ENCODE measurements at regions of chr11 and their contacts with region 1.

Region 1: GRCh38 chr11:62841361-62842184 is 2.2 kb upstream of the WDR74 start:
- H3K4me3 Mint-ChIP-seq: no peak overlapping the region
- H3K27ac Mint-ChIP-seq: no peak overlapping the region
- H3K4me1 Mint-ChIP-seq: peaks cover 25% of the 10 kb centered on the region
- H3K27me3 Mint-ChIP-seq: no peaks in the 10 kb centered on the region

Region 2: GRCh38 chr11:62295504-62295903 is 546.1 kb before region 1 on chr11:
- intact Hi-C with region 1: no loop called
- H3K4me3 Mint-ChIP-seq: no peak overlapping the region
- H3K27ac Mint-ChIP-seq: no peak overlapping the region
- H3K4me1 Mint-ChIP-seq: no peaks in the 10 kb centered on the region
- H3K27me3 Mint-ChIP-seq: peaks cover 14% of the 10 kb centered on the region

Region 3: DNA sequence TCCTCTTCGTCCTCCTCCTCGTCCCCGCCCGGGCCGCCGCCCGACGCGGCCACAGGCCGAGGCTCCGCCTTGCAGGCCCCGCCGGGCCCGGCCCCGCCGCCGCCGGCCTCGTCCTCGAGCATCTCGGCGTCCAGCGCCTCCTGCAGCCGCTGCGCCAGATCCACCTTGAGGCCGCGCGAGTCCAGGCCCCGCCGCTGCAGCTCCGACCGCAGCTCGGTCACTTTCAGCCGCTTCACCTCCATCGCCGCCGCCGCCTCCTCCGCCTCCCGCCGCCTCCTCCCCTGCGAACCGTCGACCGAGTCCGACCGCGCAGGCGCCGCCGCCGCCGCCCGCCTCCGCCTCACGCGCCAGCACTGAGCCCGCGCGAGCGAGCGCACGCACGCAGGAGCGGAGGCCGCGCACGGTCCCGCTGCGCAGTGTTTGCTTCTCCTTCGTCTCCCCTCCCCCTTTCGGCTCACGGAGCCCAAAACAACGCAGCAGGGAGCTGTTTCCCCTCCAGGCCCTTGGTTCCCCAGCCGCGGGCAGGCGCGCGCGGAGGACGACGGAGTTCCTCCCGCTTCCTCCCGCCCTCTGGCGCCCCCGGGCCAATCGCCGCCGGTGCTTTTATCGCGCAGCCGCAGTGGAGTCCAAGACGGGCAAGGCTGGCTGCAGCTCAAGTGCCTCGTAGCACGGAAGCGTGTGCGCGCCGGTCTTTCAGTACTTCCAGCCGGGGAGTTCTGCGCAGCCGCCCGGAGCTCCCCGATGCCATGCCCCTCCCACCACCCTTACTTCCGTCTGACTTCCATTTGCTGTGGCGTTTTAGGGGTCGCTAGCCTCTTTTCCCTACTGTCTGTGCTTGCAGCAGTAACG is 114.4 kb before region 1 on chr11 and contains the start of gene HNRNPUL2:
- intact Hi-C with region 1: loop called (anchors 1 kb)
- H3K4me3 Mint-ChIP-seq: peak within 1 kb of the TSS; percentile 95
- H3K27ac Mint-ChIP-seq: peak within 1 kb of the TSS; percentile 97
- H3K4me1 Mint-ChIP-seq: peaks cover 46% of the 10 kb centered on the region
- H3K27me3 Mint-ChIP-seq: no peaks in the 10 kb centered on the region

Region 4: DNA sequence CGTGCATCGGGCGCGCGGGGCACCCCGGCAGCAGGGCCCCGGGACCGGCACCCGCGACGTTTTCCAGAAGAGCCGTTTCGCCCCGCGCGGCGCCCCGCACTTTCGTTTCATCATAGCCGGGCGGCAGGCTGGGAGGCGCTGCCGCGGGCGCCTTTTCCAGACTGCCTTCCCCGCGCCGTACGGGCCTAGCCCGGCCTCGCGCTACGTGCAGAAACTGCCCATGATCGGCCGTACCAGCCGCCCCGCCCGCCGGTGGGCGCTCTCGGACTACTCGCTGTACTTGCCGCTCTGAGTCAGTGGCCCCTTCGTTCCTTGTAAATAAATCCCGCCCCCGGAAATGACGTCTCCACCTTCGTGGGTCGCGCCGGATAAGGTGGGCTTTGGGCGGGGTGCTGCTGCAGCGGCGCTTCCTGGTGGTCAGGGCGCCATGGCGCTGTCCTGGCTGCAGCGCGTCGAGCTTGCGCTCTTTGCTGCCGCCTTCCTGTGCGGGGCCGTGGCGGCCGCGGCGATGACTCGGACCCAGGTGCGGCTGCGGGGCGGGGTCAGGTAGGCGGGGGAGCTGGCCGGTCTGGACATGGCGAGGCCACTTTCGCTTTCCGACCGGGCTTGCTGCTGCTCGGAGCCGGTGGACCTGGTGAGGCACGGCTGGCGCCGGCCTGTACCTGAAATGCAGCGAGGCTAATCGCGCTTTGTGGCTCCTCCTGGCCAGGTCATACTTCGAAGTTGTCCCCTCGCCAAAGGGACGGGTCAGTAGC is 54.4 kb before region 1 on chr11 and contains the start of gene TMEM179B:
- intact Hi-C with region 1: loop called (anchors 2 kb)
- H3K4me3 Mint-ChIP-seq: peak within 1 kb of the TSS; percentile 95
- H3K27ac Mint-ChIP-seq: peak within 1 kb of the TSS; percentile 95
- H3K4me1 Mint-ChIP-seq: peaks cover 42% of the 10 kb centered on the region
- H3K27me3 Mint-ChIP-seq: no peaks in the 10 kb centered on the region

Region 5: GRCh38 chr11:62805076-62805892 is 36.3 kb before region 1 on chr11 and contains the start of gene NXF1:
- intact Hi-C with region 1: loop called (anchors 2 kb)
- H3K4me3 Mint-ChIP-seq: peak within 1 kb of the TSS; percentile 83
- H3K27ac Mint-ChIP-seq: peak within 1 kb of the TSS; percentile 89
- H3K4me1 Mint-ChIP-seq: peaks cover 56% of the 10 kb centered on the region
- H3K27me3 Mint-ChIP-seq: no peaks in the 10 kb centered on the region

Region 6: GRCh38 chr11:62855571-62856332 is 14.2 kb after region 1 on chr11:
- intact Hi-C with region 1: loop called (anchors 2 kb)
- H3K4me3 Mint-ChIP-seq: peak overlapping the region; percentile 98
- H3K27ac Mint-ChIP-seq: peak overlapping the region; percentile 95
- H3K4me1 Mint-ChIP-seq: peaks cover 73% of the 10 kb centered on the region
- H3K27me3 Mint-ChIP-seq: no peaks in the 10 kb centered on the region

Region 7: DNA sequence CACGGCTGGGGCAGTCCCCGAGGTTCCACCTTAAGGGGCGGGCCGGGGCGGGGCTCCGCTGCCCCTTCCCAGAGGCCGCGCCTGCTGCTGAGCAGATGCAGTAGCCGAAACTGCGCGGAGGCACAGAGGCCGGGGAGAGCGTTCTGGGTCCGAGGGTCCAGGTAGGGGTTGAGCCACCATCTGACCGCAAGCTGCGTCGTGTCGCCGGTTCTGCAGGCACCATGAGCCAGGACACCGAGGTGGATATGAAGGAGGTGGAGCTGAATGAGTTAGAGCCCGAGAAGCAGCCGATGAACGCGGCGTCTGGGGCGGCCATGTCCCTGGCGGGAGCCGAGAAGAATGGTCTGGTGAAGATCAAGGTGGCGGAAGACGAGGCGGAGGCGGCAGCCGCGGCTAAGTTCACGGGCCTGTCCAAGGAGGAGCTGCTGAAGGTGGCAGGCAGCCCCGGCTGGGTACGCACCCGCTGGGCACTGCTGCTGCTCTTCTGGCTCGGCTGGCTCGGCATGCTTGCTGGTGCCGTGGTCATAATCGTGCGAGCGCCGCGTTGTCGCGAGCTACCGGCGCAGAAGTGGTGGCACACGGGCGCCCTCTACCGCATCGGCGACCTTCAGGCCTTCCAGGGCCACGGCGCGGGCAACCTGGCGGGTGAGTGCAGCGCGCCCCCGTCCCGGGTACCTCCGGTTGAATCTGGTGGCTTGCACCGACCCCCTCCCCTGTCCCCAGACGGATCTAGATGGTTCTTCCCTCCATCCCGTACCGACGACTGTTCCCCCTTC is 39.4 kb after region 1 on chr11 and contains the start of gene SLC3A2:
- intact Hi-C with region 1: loop called (anchors 1 kb)
- H3K4me3 Mint-ChIP-seq: peak within 1 kb of the TSS; percentile 96
- H3K27ac Mint-ChIP-seq: peak within 1 kb of the TSS; percentile 99
- H3K4me1 Mint-ChIP-seq: peaks cover 54% of the 10 kb centered on the region
- H3K27me3 Mint-ChIP-seq: no peaks in the 10 kb centered on the region